Dorsolateral prefrontal cortex (tissue), 120 donors: ENCODE measurements at regions of chr11 and their contacts with region 1.

Region 1: DNA sequence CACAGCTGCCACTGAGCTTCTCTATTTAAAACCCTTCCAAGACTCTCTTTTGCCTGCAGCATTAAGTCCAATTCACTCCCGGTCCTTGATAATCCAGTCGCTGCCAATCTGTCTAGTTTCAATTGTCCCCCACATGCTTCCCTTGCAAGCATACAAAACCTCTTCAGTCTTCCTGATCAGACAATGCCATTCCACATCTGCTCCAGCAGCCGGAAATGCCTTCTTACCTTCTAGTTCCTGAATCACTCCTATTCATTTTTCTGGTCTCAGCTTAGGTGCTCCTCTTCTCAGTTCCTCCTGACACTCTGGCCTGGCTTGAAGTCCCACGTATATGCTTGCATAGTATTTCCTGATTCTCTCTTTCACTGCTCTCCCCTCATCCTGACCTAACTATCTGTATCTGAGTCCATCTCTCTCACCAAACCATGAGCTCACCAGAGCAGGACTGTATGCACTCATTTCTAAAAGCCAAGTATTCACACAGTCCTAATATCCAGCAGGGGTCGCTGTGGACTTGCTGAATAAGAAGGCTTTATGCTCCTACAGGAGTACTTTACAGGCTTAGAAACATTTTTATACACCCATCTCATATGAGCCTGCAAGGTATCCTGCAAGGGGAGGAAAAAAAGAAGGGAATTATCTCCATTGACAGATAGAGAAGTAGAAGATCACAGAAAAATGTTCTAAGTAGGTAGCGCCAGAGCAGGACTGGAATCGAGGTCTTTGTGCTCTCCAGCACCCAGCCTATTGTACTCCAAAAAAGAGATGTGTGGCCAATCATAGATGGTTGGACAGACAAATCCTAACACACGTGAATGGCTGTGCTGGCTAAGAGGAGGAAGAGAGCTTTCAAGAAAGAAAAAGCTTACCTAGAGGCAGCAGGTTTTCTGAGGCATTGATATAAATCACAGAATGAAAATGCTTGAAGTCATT is 19.2 kb downstream of the XRRA1 start:
- DNase-seq: peak; percentile 24 to 90 (median 58)
- H3K4me3 ChIP-seq: no peak overlapping the region
- H3K27ac ChIP-seq: peak overlapping the region in 1 of 59 donors; percentile 44
- H3K27me3 ChIP-seq: no peaks in the 10 kb centered on the region
- CTCF ChIP-seq: peak; percentile 62 to 96 (median 90)

Region 2: DNA sequence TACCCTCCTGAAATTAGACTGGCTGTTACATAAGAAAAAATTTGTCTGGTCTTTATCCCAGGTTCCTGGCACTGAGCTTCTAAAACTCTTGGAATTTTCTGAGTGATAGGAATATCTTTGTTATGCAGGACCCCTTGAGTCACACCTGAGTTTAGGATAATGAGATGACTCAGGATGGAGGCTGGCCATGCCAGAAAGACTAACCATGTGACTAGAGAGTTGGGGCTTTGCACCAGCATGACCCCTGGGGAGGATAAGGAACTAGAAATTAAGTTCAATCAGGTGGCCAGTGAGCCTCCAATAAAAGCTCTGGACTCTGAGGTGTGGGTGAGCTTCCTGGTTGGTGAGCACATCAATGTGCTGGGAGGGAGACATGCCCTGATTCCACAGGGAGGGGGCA is 69.0 kb before region 1 on chr11:
- intact Hi-C with region 1: no loop called
- DNase-seq: no peak
- H3K4me3 ChIP-seq: no peak overlapping the region
- H3K27ac ChIP-seq: no peak overlapping the region
- H3K27me3 ChIP-seq: no peaks in the 10 kb centered on the region
- CTCF ChIP-seq: no peak

Region 3: GRCh38 chr11:74948898-74949747 is 19.4 kb after region 1 on chr11 and contains the starts of genes SPCS2 and XRRA1:
- intact Hi-C with region 1: no loop called
- DNase-seq: peak; percentile 98 to 99 (median 99)
- H3K4me3 ChIP-seq: peak within 1 kb of the TSS; percentile 62 to 99 (median 92)
- H3K27ac ChIP-seq: peak within 1 kb of the TSS in 57 of 59 donors; percentile 23 to 91 (median 80)
- H3K27me3 ChIP-seq: no peaks in the 10 kb centered on the region
- CTCF ChIP-seq: peak in 36 of 56 donors; percentile 0 to 59 (median 30)
- total RNA-seq, gene SPCS2: 91.9 to 159 (median 120) TPM
- total RNA-seq, gene XRRA1: 11.0 to 66.2 (median 28.2) TPM

Region 4: GRCh38 chr11:75031771-75032549 is 102.3 kb after region 1 on chr11:
- intact Hi-C with region 1: loop called (anchors 2 to 5 kb)
- DNase-seq: peak in 9 of 10 donors; percentile 58 to 81 (median 71)
- H3K4me3 ChIP-seq: no peak overlapping the region
- H3K27ac ChIP-seq: peak overlapping the region in 4 of 59 donors; percentile 17 to 56 (median 42)
- H3K27me3 ChIP-seq: no peaks in the 10 kb centered on the region
- CTCF ChIP-seq: peak; percentile 34 to 85 (median 70)

Region 5: GRCh38 chr11:75241036-75241905 is 311.6 kb after region 1 on chr11:
- intact Hi-C with region 1: loop called (anchors 2 to 5 kb)
- DNase-seq: peak; percentile 45 to 87 (median 66)
- H3K4me3 ChIP-seq: peak overlapping the region; percentile 30 to 72 (median 54)
- H3K27ac ChIP-seq: peak overlapping the region in 24 of 59 donors; percentile 17 to 78 (median 52)
- H3K27me3 ChIP-seq: peaks cover 0 to 17% (median 0%) of the 10 kb centered on the region in 45 donors
- CTCF ChIP-seq: peak in 55 of 56 donors; percentile 19 to 98 (median 78)

Region 6: GRCh38 chr11:75248690-75249268 is 319.1 kb after region 1 on chr11:
- intact Hi-C with region 1: loop called (anchors 2 to 5 kb)
- DNase-seq: peak; percentile 69 to 89 (median 84)
- H3K4me3 ChIP-seq: peak overlapping the region in 5 of 59 donors; percentile 3 to 32 (median 20)
- H3K27ac ChIP-seq: no peak overlapping the region
- H3K27me3 ChIP-seq: peaks cover 0 to 5% (median 0%) of the 10 kb centered on the region in 45 donors
- CTCF ChIP-seq: peak; percentile 91 to 100 (median 100)